ENCODE measurements at regions of chr2 and their contacts with region 1.

Region 1: DNA sequence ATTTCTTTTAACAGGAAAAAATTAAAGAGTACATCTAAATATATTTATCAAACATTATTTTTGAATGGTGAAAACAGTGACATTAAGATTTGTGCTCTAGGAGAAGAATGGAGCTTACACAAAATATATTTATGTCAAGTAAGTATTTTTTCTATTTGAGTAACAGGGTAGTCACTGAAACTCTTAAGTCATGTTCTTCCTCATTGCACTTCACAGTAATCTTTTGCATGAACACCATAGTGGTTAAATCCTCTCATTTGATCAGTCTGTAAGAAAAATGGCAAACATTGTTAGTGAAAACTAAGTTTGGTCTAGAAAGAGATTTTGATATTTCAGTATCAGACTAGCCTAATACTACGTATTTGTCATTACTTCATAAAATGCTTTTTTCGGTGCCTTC is 8.1 kb downstream of the GMCL1 start:
- DNase-seq: no peak
- ATAC-seq: no peak
- H3K4me3 ChIP-seq: no peak overlapping the region
- H3K4me3 Mint-ChIP-seq: no peak overlapping the region
- H3K27ac ChIP-seq: no peak overlapping the region
- H3K27ac Mint-ChIP-seq: no peak overlapping the region
- H3K4me1 ChIP-seq: peaks cover 4% of the 10 kb centered on the region in 2 experiments
- H3K4me1 Mint-ChIP-seq: peaks cover 37 to 48% (median 43%) of the 10 kb centered on the region in 3 donors
- H3K27me3 ChIP-seq: no peaks in the 10 kb centered on the region
- H3K27me3 Mint-ChIP-seq: no peaks in the 10 kb centered on the region

Region 2: GRCh38 chr2:69589973-69590652 is 247.4 kb before region 1 on chr2:
- CTCF ChIA-PET with region 1: no interaction called
- POLR2A ChIA-PET with region 1: no interaction called
- DNase-seq: no peak
- ATAC-seq: peak; percentile 40 to 63 (median 57)
- H3K4me3 ChIP-seq: no peak overlapping the region
- H3K4me3 Mint-ChIP-seq: peak overlapping the region; percentile 5 to 54 (median 42)
- H3K27ac ChIP-seq: no peak overlapping the region
- H3K27ac Mint-ChIP-seq: peak overlapping the region; percentile 66 to 73
- H3K4me1 ChIP-seq: peaks cover 20 to 43% of the 10 kb centered on the region in 2 experiments
- H3K4me1 Mint-ChIP-seq: peaks cover 81 to 91% (median 86%) of the 10 kb centered on the region in 3 donors
- H3K27me3 ChIP-seq: no peaks in the 10 kb centered on the region
- H3K27me3 Mint-ChIP-seq: no peaks in the 10 kb centered on the region

Region 3: DNA sequence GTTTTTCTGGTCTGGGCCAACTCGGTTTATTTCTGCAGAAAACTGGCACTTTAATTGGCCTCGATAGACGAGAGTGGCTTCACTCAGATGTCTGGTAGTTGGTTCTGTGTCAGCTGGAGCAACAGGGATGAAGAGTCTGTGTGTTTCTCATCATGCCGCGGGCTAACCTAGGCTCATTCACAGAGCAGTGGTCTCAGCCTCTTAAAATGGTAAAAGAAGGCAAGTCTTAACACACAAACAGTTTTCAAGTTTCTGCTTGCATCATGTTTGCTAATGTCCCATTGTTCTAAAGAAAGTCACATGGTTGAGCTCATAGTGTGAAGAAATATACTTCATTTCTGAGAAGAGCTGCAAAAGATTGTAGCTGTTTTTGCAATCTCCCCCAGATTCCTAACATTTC is 133.1 kb before region 1 on chr2:
- CTCF ChIA-PET with region 1: no interaction called
- POLR2A ChIA-PET with region 1: interaction called in 1 of 2 experiments, 10 read pairs
- DNase-seq: no peak
- ATAC-seq: no peak
- H3K4me3 ChIP-seq: no peak overlapping the region
- H3K4me3 Mint-ChIP-seq: no peak overlapping the region
- H3K27ac ChIP-seq: no peak overlapping the region
- H3K27ac Mint-ChIP-seq: no peak overlapping the region
- H3K4me1 ChIP-seq: peaks cover 0 to under 1% of the 10 kb centered on the region in 2 experiments
- H3K4me1 Mint-ChIP-seq: peaks cover 9 to 16% (median 16%) of the 10 kb centered on the region in 3 donors
- H3K27me3 ChIP-seq: no peaks in the 10 kb centered on the region
- H3K27me3 Mint-ChIP-seq: no peaks in the 10 kb centered on the region

Region 4: GRCh38 chr2:69734035-69734631 is 103.4 kb before region 1 on chr2:
- CTCF ChIA-PET with region 1: no interaction called
- POLR2A ChIA-PET with region 1: no interaction called
- DNase-seq: no peak
- ATAC-seq: no peak
- H3K4me3 ChIP-seq: no peak overlapping the region
- H3K4me3 Mint-ChIP-seq: no peak overlapping the region
- H3K27ac ChIP-seq: no peak overlapping the region
- H3K27ac Mint-ChIP-seq: no peak overlapping the region
- H3K4me1 ChIP-seq: no peaks in the 10 kb centered on the region
- H3K4me1 Mint-ChIP-seq: peaks cover 0 to 2% (median 0%) of the 10 kb centered on the region in 3 donors
- H3K27me3 ChIP-seq: no peaks in the 10 kb centered on the region
- H3K27me3 Mint-ChIP-seq: no peaks in the 10 kb centered on the region

Region 5: DNA sequence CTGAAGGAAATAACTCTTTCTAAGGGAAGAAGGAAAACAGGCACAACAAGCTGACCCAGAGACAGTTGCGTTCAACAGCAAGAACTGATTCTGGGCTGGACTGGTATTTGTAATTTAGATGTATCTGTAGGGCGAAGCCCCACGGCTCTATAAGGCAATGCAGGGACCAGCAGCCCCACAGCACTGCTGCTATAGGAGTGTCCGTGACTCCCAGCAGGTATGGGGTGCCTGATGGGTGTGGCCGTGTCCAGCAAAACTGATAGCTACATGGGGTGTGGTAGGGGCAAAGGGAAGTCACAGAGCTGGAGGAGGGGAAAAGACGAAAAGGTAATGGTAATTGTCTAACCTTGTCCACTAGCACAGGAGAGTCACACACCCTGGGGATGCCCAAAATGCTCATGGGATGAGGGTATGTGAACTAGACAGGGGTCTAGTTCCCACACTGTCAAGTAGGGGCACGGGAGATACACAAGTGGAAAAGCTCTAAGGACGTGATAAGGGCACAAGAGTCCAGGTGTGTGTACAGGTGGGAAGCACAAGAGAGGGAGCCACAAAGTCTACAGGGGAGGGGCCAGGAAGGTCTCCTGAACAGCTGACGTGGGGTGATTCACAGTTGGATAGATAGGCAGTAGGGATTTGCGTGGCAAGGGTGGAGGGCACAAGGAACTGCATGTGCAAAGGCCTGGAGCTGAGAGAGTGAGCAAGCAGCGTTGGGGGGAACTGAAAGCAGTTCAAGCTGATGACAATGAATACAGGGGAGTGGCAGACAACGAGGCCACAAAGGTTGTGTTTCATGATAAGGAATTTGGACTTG is 172.4 kb after region 1 on chr2:
- CTCF ChIA-PET with region 1: no interaction called
- POLR2A ChIA-PET with region 1: no interaction called
- DNase-seq: peak in 1 of 35 experiments; percentile 21
- ATAC-seq: no peak
- H3K4me3 ChIP-seq: no peak overlapping the region
- H3K4me3 Mint-ChIP-seq: no peak overlapping the region
- H3K27ac ChIP-seq: no peak overlapping the region
- H3K27ac Mint-ChIP-seq: peak overlapping the region in 1 of 2 donors; percentile 18
- H3K4me1 ChIP-seq: no peaks in the 10 kb centered on the region
- H3K4me1 Mint-ChIP-seq: peaks cover 4 to 12% (median 11%) of the 10 kb centered on the region in 3 donors
- H3K27me3 ChIP-seq: no peaks in the 10 kb centered on the region
- H3K27me3 Mint-ChIP-seq: no peaks in the 10 kb centered on the region

Region 6: DNA sequence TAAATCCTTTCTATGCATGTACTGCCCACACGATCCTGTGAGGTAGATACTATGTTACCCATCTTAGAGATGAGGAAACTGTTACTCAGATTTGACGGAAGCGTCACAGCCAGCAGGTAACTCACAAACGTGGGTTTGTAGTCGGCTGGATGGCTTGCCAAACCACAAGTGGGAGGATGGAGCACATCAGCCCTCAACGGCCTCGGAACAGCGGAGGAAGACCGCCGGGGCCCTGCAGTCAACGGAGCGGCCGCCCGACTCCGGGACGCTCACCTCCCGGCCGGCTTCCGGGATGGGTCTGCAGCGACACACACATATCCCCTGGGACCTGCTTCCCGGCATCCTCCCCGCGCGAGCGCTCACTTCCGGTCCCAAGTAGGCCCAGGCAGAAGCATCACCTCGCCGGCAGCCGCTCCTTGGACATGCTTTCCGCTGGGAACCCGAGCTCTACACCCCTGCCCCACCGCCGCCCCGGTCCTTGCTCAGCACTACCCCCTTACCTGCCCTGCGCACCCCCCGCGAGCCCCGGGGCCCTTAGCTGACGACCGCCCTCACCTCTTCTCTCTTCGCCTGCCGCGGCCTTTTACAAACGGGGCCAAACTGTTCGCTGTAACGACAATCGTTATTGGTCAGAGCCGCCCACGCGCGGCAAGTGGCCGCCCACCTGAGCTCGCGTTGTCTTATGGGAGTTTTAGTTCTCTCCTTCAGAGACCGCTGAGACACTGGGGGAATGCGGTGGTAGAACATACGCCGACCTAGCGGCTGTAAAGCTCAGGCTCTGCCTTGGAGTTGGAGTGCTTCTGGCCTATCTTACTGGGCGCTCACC is 353.1 kb after region 1 on chr2 and contains the start of gene C2orf42:
- CTCF ChIA-PET with region 1: no interaction called
- POLR2A ChIA-PET with region 1: interaction called in 1 of 2 experiments, 10 read pairs
- DNase-seq: peak; percentile 88 to 97 (median 94)
- ATAC-seq: peak; percentile 85 to 91 (median 88)
- H3K4me3 ChIP-seq: peak within 1 kb of the TSS; percentile 73
- H3K4me3 Mint-ChIP-seq: peak within 1 kb of the TSS; percentile 88 to 97 (median 91)
- H3K27ac ChIP-seq: peak within 1 kb of the TSS; percentile 95
- H3K27ac Mint-ChIP-seq: peak within 1 kb of the TSS; percentile 98 to 99
- H3K4me1 ChIP-seq: peaks cover 7 to 8% of the 10 kb centered on the region in 2 experiments
- H3K4me1 Mint-ChIP-seq: peaks cover 17 to 24% (median 22%) of the 10 kb centered on the region in 3 donors
- H3K27me3 ChIP-seq: no peaks in the 10 kb centered on the region
- H3K27me3 Mint-ChIP-seq: no peaks in the 10 kb centered on the region
- total RNA-seq, gene C2orf42: 23.3 to 45.9 (median 39.1) TPM

Measured in T-cell (primary cell).